Endothelial cell of umbilical vein (primary cell): ENCODE measurements at regions of chr17 and their contacts with region 1.

Region 1: GRCh38 chr17:38557836-38558727 is 47.7 kb downstream of the SRCIN1 start:
- DNase-seq: peak; percentile 89
- H3K4me3 ChIP-seq: peak overlapping the region in 1 of 3 experiments; percentile 18
- H3K27ac ChIP-seq: no peak overlapping the region
- H3K4me1 ChIP-seq: peaks cover 13% of the 10 kb centered on the region
- H3K27me3 ChIP-seq: peaks cover 45 to 58% of the 10 kb centered on the region in 2 experiments
- CTCF ChIP-seq: peak; percentile 94 to 98
- POLR2A ChIP-seq: no peak

Region 2: DNA sequence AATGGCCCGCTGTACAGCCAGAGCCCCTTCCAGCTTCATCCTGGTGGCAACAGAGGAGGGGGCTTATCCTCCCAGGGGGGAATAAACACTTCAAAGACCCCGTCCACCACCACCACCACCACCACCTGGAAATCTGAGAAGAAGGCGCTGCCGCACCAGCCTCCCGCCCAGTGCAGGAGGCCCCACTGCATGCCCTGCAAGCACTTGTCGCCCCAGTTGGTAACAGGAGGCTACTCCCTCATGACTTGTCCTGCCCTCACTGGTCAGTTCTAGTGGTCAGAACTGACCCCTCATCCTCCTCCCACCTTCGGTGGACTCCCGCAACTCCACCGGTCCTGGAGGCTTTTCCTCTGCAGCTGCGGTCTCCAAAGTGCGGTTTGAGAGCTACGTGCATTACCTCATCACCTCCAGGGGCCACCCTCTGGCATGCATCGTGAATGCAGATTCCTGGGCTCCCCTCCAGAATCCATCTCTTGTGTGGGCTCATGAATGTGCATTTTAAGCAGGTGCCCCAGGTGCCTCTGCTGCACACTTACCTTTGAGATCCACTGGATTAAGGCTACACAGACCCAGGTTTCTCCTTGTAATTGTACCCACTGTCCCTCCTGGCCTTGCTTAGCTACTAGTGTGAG is 24.1 kb before region 1 on chr17:
- CTCF ChIA-PET with region 1: interaction called, 36 read pairs
- POLR2A ChIA-PET with region 1: no interaction called
- dilution Hi-C with region 1: no loop called
- intact Hi-C with region 1: no loop called
- DNase-seq: no peak
- H3K4me3 ChIP-seq: no peak overlapping the region
- H3K27ac ChIP-seq: no peak overlapping the region
- H3K4me1 ChIP-seq: no peaks in the 10 kb centered on the region
- H3K27me3 ChIP-seq: peaks cover 0 to 3% of the 10 kb centered on the region in 2 experiments
- CTCF ChIP-seq: no peak
- POLR2A ChIP-seq: no peak

Region 3: GRCh38 chr17:38544839-38545209 is 13.3 kb before region 1 on chr17:
- CTCF ChIA-PET with region 1: interaction called, 40 read pairs
- POLR2A ChIA-PET with region 1: no interaction called
- dilution Hi-C with region 1: no loop called
- intact Hi-C with region 1: no loop called
- DNase-seq: no peak
- H3K4me3 ChIP-seq: no peak overlapping the region
- H3K27ac ChIP-seq: no peak overlapping the region
- H3K4me1 ChIP-seq: no peaks in the 10 kb centered on the region
- H3K27me3 ChIP-seq: no peaks in the 10 kb centered on the region
- CTCF ChIP-seq: no peak
- POLR2A ChIP-seq: no peak

Region 4: DNA sequence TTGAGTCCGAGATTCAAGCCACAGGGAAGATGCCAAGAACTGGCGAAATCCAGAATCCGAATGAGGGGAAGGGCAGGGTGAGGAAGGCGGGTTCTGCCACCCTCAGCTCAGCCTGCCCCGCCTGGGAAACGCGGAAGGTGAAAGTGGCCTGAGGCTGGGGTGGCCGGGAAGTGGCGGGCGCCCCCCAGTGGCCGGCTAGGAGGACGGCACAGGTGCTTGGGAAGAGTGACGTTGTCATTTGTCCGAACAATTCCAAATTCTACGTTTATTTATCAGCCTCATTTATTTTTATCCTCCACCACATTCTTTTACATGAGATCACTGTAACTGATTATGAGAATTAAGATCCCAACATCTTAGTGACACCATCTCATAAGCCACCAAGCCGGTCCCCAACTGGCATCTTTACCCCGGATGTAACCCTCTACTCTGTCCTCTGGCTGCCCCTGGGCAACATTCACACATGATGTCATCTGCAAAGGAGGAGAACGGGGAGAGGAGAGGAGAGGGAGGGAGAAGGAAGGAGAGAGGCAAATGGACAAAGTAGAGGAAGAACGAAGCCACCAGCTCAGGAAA is 26.4 kb after region 1 on chr17:
- CTCF ChIA-PET with region 1: interaction called, 91 read pairs
- POLR2A ChIA-PET with region 1: interaction called, 15 read pairs
- dilution Hi-C with region 1: no loop called
- intact Hi-C with region 1: loop called (anchors 1 kb)
- DNase-seq: peak; percentile 28
- H3K4me3 ChIP-seq: no peak overlapping the region
- H3K27ac ChIP-seq: no peak overlapping the region
- H3K4me1 ChIP-seq: no peaks in the 10 kb centered on the region
- H3K27me3 ChIP-seq: peaks cover 24 to 26% of the 10 kb centered on the region in 2 experiments
- CTCF ChIP-seq: peak; percentile 93 to 98
- POLR2A ChIP-seq: no peak

Region 5: DNA sequence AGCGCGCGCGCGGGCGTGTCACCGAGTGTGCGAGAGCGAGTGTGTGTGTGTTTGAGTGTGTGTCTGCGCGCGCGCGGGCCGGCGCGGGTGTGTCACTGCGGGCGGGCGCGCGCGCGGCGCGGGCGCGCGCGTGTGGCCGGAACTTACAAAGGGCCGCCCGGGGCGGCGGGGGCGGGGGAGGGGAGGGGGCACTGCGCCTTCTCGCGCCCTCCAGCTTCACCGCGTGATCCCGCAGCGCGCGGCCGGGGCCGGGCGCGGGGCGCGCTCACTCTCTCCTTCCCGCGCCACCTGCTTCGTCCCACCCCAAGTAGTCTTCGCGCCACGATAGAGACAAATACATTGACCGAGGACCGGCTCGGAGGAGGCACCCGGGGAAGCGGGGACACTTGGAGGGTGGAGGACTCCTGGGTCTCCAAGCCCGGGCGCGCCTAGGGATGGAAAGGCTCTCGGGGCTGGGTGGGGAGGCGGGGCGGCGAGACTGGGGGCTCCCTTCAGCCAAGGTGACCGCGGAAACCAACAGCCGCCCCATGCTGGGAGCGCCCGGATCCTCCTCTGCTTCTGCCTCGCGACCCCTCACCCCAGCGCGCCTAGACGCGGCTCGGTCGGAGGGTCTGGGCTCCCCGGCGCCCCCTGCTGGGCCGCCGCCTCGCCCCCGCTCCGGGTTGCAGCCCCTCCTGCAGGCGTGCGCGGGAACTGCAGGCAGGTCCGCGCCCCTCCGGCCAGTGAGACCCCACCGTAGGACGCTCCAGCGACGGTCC is 48.0 kb after region 1 on chr17 and contains the start of gene SRCIN1:
- CTCF ChIA-PET with region 1: interaction called, 31 read pairs
- POLR2A ChIA-PET with region 1: no interaction called
- dilution Hi-C with region 1: no loop called
- intact Hi-C with region 1: no loop called
- DNase-seq: no peak
- H3K4me3 ChIP-seq: peak within 1 kb of the TSS in 2 of 3 experiments; percentile 41 to 58
- H3K27ac ChIP-seq: no peak within 1 kb of the TSS
- H3K4me1 ChIP-seq: no peaks in the 10 kb centered on the region
- H3K27me3 ChIP-seq: peaks cover 28 to 36% of the 10 kb centered on the region in 2 experiments
- CTCF ChIP-seq: peak; percentile 96 to 99
- POLR2A ChIP-seq: no peak
- total RNA-seq, gene SRCIN1: 0.12 and 0.35 TPM in 2 replicates

Region 6: GRCh38 chr17:38667099-38667786 is 109.2 kb after region 1 on chr17:
- CTCF ChIA-PET with region 1: interaction called, 321 read pairs
- POLR2A ChIA-PET with region 1: interaction called, 3 read pairs
- dilution Hi-C with region 1: no loop called
- intact Hi-C with region 1: loop called (anchors 1 kb)
- DNase-seq: peak; percentile 72
- H3K4me3 ChIP-seq: no peak overlapping the region
- H3K27ac ChIP-seq: no peak overlapping the region
- H3K4me1 ChIP-seq: no peaks in the 10 kb centered on the region
- H3K27me3 ChIP-seq: peaks cover 38% of the 10 kb centered on the region in 2 experiments
- CTCF ChIP-seq: peak; percentile 98 to 99
- POLR2A ChIP-seq: no peak

Region 7: GRCh38 chr17:38735161-38735997 is 177.3 kb after region 1 on chr17:
- CTCF ChIA-PET with region 1: interaction called, 15 read pairs
- POLR2A ChIA-PET with region 1: no interaction called
- dilution Hi-C with region 1: no loop called
- intact Hi-C with region 1: no loop called
- DNase-seq: no peak
- H3K4me3 ChIP-seq: no peak overlapping the region
- H3K27ac ChIP-seq: no peak overlapping the region
- H3K4me1 ChIP-seq: peaks cover 19% of the 10 kb centered on the region
- H3K27me3 ChIP-seq: no peaks in the 10 kb centered on the region
- CTCF ChIP-seq: peak; percentile 78 to 94
- POLR2A ChIP-seq: peak; percentile 11